Caco-2 (cell line): ENCODE measurements at regions of chr12 and their contacts with region 1.

Region 1: DNA sequence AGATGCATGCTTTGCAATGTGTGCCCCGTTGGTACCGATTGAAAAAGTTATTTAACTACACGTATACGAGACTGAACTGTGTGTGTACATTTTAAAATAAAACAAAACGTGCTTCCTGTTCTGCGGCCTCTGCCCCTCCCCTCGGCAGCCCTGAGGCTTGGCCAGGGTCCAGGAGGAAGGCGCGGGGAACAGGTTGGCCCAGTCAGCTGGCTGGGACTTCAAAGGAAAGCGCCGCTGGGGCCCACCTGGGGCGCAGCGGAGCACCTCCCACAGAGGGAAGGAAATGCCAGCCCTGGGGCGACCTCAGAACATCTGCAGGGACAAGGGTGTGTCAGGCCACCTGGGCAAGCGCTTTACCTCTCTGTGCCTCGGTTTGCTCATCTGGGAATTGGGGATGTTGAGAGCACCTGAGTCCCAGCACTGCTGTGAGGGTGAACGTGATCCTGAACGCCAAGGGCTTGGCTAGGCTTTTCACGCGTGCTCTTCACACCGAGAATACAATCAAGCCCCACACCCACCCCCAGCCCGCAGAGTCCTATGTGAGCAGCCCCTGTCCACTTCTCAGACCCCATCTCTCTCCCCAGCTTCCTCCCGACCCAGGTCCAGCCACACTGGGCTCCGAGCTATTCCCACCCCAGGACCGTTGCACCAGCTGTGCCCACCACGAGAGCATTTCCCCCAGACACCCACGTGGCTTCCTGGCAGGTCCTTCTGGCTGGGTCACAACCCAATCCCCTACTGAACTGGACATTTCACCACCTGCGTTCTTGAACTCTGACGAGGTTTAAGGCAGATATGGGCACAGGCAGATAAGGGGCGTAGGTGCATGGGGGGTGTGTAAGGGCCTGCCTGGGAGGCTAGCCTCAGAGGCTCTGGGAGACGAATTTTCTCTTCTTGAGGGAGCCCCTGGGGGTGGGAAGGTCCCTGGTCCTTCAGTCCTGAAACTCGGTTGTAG is 41.9 kb upstream of the NCOR2 start:
- DNase-seq: peak; percentile 93 to 96
- H3K4me3 ChIP-seq: no peak overlapping the region
- H3K4me3 Mint-ChIP-seq: peak overlapping the region; percentile 57
- H3K27ac Mint-ChIP-seq: peak overlapping the region; percentile 72
- H3K4me1 ChIP-seq: peaks cover 56% of the 10 kb centered on the region
- H3K4me1 Mint-ChIP-seq: peaks cover 48% of the 10 kb centered on the region
- H3K27me3 ChIP-seq: no peaks in the 10 kb centered on the region
- H3K27me3 Mint-ChIP-seq: no peaks in the 10 kb centered on the region
- CTCF ChIP-seq: no peak

Region 2: DNA sequence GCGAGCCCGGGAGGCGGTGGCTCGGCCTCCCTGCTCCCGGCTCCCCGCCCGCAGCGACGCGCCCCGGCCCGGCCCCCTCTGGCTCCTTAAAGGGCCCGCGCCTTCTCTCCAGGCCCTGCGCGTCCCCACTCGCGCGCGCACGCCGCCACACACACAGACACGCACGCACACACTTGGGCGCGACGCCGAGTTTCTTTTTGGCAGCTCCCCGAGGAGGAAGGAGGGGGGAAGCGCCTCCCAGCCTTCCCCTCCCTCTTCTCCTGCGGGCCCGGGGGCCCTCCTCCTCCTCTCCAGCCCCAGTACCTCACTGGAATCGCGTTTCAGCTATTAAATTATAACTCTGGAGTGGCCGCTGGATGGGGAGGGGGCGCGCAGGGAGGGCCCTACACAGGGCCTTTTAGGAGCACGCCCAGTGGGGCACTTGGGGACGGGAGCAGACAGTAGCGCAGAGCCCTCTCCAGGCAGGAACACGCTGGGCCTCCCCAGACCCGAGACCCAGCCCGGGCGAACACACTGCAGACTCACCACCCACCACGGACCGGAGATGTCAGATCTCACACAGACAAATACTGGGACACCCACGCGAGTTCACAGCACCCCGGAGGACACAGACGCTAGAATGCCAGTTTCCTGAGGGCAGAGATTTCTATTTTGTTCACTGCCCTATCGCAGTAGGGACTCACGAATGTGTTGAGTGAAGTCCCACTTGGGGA is 41.5 kb before region 1 on chr12:
- CTCF ChIA-PET with region 1: no interaction called
- POLR2A ChIA-PET with region 1: no interaction called
- intact Hi-C with region 1: loop called (anchors 2 kb)
- DNase-seq: peak; percentile 79 to 84
- H3K4me3 ChIP-seq: peak overlapping the region; percentile 57
- H3K4me3 Mint-ChIP-seq: peak overlapping the region; percentile 77
- H3K27ac Mint-ChIP-seq: peak overlapping the region; percentile 72
- H3K4me1 ChIP-seq: peaks cover 6% of the 10 kb centered on the region
- H3K4me1 Mint-ChIP-seq: no peaks in the 10 kb centered on the region
- H3K27me3 ChIP-seq: no peaks in the 10 kb centered on the region
- H3K27me3 Mint-ChIP-seq: no peaks in the 10 kb centered on the region
- CTCF ChIP-seq: no peak

Region 3: GRCh38 chr12:124586756-124587155 is 22.6 kb before region 1 on chr12:
- CTCF ChIA-PET with region 1: no interaction called
- POLR2A ChIA-PET with region 1: no interaction called
- intact Hi-C with region 1: loop called (anchors 2 kb)
- DNase-seq: peak; percentile 62 to 68
- H3K4me3 ChIP-seq: no peak overlapping the region
- H3K4me3 Mint-ChIP-seq: peak overlapping the region; percentile 47
- H3K27ac Mint-ChIP-seq: no peak overlapping the region
- H3K4me1 ChIP-seq: peaks cover 8% of the 10 kb centered on the region; the same call in 1 of the 2 replicates
- H3K4me1 Mint-ChIP-seq: peaks cover 6% of the 10 kb centered on the region
- H3K27me3 ChIP-seq: no peaks in the 10 kb centered on the region
- H3K27me3 Mint-ChIP-seq: no peaks in the 10 kb centered on the region
- CTCF ChIP-seq: no peak

Region 4: DNA sequence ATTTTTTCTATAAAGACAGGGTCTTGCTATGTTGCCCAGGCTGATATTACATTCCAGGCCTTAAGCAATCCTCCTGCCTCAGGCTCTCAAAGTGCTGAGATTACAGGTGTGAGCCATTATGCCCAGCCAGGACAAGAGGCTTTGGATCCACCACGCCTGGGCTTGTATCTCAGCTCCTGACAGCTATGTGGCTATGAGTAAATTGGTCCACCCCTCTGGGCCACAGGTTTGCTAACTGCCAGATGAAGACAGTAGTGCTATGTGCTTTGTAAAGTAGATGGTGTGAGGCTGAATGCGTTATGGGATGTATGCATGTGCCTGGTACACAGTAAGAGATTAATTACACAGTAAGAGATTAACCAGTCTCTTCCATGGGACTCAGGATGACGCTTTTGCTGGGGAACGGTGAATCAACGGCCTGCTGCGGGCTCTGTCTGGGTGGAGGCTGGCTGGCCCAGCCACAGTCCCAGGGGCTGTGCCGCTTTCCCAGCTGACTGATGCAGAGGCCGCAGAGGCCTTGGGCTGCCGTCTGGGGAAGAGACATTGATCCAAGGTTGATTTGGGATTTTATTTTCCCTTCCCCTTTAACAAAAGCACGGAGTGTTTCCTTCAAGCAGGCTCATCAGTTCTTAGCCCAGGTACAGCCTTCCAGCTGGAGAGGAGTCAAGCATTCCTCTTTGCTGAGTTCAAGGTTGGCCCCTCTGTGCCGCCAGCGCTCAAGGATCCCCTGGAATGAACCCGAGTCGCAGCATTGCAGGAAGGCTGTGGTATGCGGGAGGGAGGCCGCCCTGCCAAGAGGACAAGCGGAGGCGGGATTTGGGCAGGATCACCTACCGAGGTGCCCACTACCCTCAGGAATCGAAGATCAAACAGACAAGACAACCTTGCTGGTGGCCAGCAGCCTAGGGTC is 11.7 kb after region 1 on chr12:
- CTCF ChIA-PET with region 1: no interaction called
- POLR2A ChIA-PET with region 1: no interaction called
- intact Hi-C with region 1: loop called (anchors 2 kb)
- DNase-seq: no peak
- H3K4me3 ChIP-seq: no peak overlapping the region
- H3K4me3 Mint-ChIP-seq: no peak overlapping the region
- H3K27ac Mint-ChIP-seq: peak overlapping the region; percentile 30
- H3K4me1 ChIP-seq: peaks cover 8% of the 10 kb centered on the region
- H3K4me1 Mint-ChIP-seq: peaks cover 6% of the 10 kb centered on the region
- H3K27me3 ChIP-seq: no peaks in the 10 kb centered on the region
- H3K27me3 Mint-ChIP-seq: no peaks in the 10 kb centered on the region
- CTCF ChIP-seq: no peak

Region 5: GRCh38 chr12:124633273-124633966 is 24.1 kb after region 1 on chr12:
- CTCF ChIA-PET with region 1: interaction called, 3 read pairs
- POLR2A ChIA-PET with region 1: no interaction called
- intact Hi-C with region 1: loop called (anchors 2 kb)
- DNase-seq: peak; percentile 69 to 91
- H3K4me3 ChIP-seq: no peak overlapping the region
- H3K4me3 Mint-ChIP-seq: peak overlapping the region; percentile 39
- H3K27ac Mint-ChIP-seq: peak overlapping the region; percentile 92
- H3K4me1 ChIP-seq: peaks cover 72% of the 10 kb centered on the region
- H3K4me1 Mint-ChIP-seq: peaks cover 38% of the 10 kb centered on the region
- H3K27me3 ChIP-seq: no peaks in the 10 kb centered on the region
- H3K27me3 Mint-ChIP-seq: no peaks in the 10 kb centered on the region
- CTCF ChIP-seq: peak in 1 of 2 experiments; percentile 27

Region 6: GRCh38 chr12:124648710-124649384 is 39.5 kb after region 1 on chr12:
- CTCF ChIA-PET with region 1: no interaction called
- POLR2A ChIA-PET with region 1: no interaction called
- intact Hi-C with region 1: loop called (anchors 1 kb)
- DNase-seq: no peak
- H3K4me3 ChIP-seq: no peak overlapping the region
- H3K4me3 Mint-ChIP-seq: no peak overlapping the region
- H3K27ac Mint-ChIP-seq: no peak overlapping the region
- H3K4me1 ChIP-seq: no peaks in the 10 kb centered on the region
- H3K4me1 Mint-ChIP-seq: no peaks in the 10 kb centered on the region
- H3K27me3 ChIP-seq: no peaks in the 10 kb centered on the region
- H3K27me3 Mint-ChIP-seq: no peaks in the 10 kb centered on the region
- CTCF ChIP-seq: no peak